Activated naive CD8-positive, alpha-beta T cell treated with anti-CD3 and anti-CD28 coated beads, Interleukin-2, amount 10 ng/mL, durations not matched to agents 7 days and 5 days (primary cell): ENCODE measurements at regions of chr12 and their contacts with region 1.

Region 1: GRCh38 chr12:25322918-25323532 is 72.3 kb upstream of the KRAS start:
- DNase-seq: no peak
- ATAC-seq: peak; percentile 38
- H3K4me3 Mint-ChIP-seq: peak overlapping the region; percentile 85
- H3K27ac Mint-ChIP-seq: peak overlapping the region; percentile 94
- H3K4me1 Mint-ChIP-seq: peaks cover 37% of the 10 kb centered on the region
- H3K27me3 Mint-ChIP-seq: no peaks in the 10 kb centered on the region

Region 2: DNA sequence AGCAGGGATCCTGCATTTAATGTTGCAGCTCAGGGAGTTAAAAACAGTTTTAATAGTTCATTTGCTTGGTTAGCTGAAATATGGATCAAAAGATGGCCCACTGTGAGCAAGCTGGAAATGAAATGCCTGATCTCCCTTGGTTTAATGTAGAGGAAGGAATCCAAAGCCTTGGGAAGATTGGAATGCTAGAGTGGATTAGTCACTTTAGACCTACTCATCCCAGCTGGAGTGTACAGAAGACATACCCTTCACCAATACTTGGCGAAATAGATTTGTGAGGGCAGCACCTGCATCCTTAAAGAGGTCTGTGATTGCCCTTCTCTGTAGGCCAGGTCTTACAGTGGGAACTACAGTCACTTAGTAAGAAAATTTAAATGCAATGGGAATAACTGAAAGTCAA is 14.3 kb before region 1 on chr12:
- POLR2A ChIA-PET with region 1: no interaction called
- DNase-seq: no peak
- ATAC-seq: no peak
- H3K4me3 Mint-ChIP-seq: no peak overlapping the region
- H3K27ac Mint-ChIP-seq: no peak overlapping the region
- H3K4me1 Mint-ChIP-seq: no peaks in the 10 kb centered on the region
- H3K27me3 Mint-ChIP-seq: peaks cover 5% of the 10 kb centered on the region

Region 3: GRCh38 chr12:25384038-25384892 is 61.2 kb after region 1 on chr12:
- POLR2A ChIA-PET with region 1: interaction called, 14 read pairs
- DNase-seq: no peak
- ATAC-seq: no peak
- H3K4me3 Mint-ChIP-seq: peak overlapping the region; percentile 99
- H3K27ac Mint-ChIP-seq: peak overlapping the region; percentile 100
- H3K4me1 Mint-ChIP-seq: peaks cover 50% of the 10 kb centered on the region
- H3K27me3 Mint-ChIP-seq: no peaks in the 10 kb centered on the region